Vagina (tissue), 2 donors: ENCODE measurements at regions of chr6 and their contacts with region 1.

Region 1: GRCh38 chr6:26464416-26465131 is 6.8 kb downstream of the BTN2A1 start:
- DNase-seq: no peak
- H3K4me3 ChIP-seq: no peak overlapping the region
- H3K27ac ChIP-seq: no peak overlapping the region
- H3K4me1 ChIP-seq: peaks cover 28% of the 10 kb centered on the region
- H3K27me3 ChIP-seq: no peaks in the 10 kb centered on the region
- CTCF ChIP-seq: no peak
- POLR2A ChIP-seq: no peak

Region 2: DNA sequence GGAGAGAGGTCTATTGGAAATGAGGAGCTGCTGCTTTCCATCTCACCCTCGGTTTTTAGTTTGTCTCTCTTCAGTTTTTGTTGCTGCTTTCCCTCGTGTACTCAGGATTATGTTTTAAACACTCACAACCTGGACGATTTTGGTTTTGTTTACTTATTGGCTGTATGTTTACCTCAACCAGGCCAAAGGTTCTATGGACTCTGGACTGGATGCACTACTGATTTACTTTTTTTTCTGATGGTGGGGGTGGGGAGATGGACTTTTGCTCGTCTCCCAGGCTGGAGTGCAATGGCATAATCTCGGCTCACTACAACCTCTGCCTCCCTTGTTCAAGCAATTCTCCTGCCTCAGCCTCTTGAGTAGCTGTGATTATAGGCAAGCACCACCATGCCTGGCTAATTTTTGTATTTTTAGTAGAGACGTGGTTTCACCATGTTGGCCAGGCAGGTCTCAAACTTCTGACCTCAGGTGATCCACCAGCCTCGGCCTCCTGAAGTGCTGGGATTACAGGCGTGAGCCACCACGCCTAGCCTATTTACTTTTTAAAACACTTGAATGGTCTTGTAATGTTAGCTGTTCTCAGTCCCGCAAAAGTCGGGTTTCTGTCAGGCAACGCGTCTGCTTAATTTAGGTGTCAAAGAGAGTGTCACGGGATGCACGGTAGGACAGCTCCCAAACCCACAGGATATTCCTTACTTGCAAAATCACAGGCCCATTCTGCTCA is 1380.6 kb before region 1 on chr6:
- intact Hi-C with region 1: loop called (anchors 5 kb)
- DNase-seq: no peak
- H3K4me3 ChIP-seq: no peak overlapping the region
- H3K27ac ChIP-seq: no peak overlapping the region
- H3K4me1 ChIP-seq: no peaks in the 10 kb centered on the region
- H3K27me3 ChIP-seq: no peaks in the 10 kb centered on the region
- CTCF ChIP-seq: no peak
- POLR2A ChIP-seq: no peak